ENCODE measurements at regions of chr16 and their contacts with region 1.

Region 1: GRCh38 chr16:87702325-87702811 is 63.4 kb downstream of the KLHDC4 start:
- DNase-seq: peak in 6 of 9 donors; percentile 21 to 41 (median 36)
- ATAC-seq: peak; percentile 60
- H3K4me3 ChIP-seq: no peak overlapping the region
- H3K4me3 Mint-ChIP-seq: peak overlapping the region; percentile 15 to 84 (median 76)
- H3K27ac ChIP-seq: peak overlapping the region; percentile 57
- H3K27ac Mint-ChIP-seq: peak overlapping the region; percentile 66 to 93 (median 91)
- H3K4me1 ChIP-seq: peaks cover 21 to 31% of the 10 kb centered on the region in 2 donors
- H3K4me1 Mint-ChIP-seq: peaks cover 29 to 55% (median 50%) of the 10 kb centered on the region in 7 donors
- H3K27me3 ChIP-seq: no peaks in the 10 kb centered on the region
- H3K27me3 Mint-ChIP-seq: no peaks in the 10 kb centered on the region

Region 2: GRCh38 chr16:87713451-87714229 is 11.3 kb after region 1 on chr16:
- CTCF ChIA-PET with region 1: no interaction called
- POLR2A ChIA-PET with region 1: interaction called, 3 read pairs
- intact Hi-C with region 1: loop called in 1 of 2 experiments (anchors 1 kb)
- DNase-seq: peak in 7 of 9 donors; percentile 54 to 68 (median 57)
- ATAC-seq: peak; percentile 93
- H3K4me3 ChIP-seq: peak overlapping the region; percentile 11
- H3K4me3 Mint-ChIP-seq: peak overlapping the region in 9 of 10 donors; percentile 50 to 79 (median 65)
- H3K27ac ChIP-seq: peak overlapping the region; percentile 61
- H3K27ac Mint-ChIP-seq: peak overlapping the region; percentile 70 to 97 (median 92)
- H3K4me1 ChIP-seq: peaks cover 11 to 26% of the 10 kb centered on the region in 2 donors
- H3K4me1 Mint-ChIP-seq: peaks cover 13 to 45% (median 27%) of the 10 kb centered on the region in 7 donors
- H3K27me3 ChIP-seq: no peaks in the 10 kb centered on the region
- H3K27me3 Mint-ChIP-seq: no peaks in the 10 kb centered on the region

Region 3: DNA sequence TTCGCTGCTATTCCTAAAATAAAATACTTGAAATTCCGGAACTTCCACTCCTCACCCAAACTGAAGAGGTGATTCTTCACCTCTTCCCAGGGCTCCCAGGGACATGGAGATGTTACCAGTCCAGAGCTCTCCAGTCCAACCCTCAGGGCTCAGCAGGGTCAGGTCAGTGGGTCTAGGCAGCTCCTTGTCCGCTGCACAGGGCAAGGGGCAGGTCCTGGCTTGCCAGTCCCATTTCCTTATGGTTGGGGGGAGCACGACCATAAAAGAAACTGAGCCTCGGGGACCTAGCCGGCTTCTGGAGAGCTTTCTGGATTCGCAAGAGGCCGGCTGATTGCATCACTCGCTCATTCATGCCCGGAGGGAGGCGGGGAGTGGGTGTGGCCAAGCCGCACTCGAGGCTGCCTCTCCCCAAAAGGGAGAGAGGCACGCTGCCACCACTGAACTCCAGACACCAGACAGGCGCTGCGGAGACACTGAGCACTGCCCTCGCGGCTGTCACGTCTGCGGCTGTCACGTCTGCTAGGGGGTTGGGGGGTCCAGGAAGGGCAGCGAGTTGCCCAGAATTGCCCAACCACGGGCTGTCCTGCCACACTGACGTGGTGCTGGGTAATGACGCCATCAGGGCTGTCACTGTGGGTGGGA is 151.2 kb after region 1 on chr16:
- CTCF ChIA-PET with region 1: no interaction called
- POLR2A ChIA-PET with region 1: no interaction called
- intact Hi-C with region 1: no loop called
- DNase-seq: peak; percentile 44 to 83 (median 60)
- ATAC-seq: peak; percentile 83
- H3K4me3 ChIP-seq: peak overlapping the region; percentile 18
- H3K4me3 Mint-ChIP-seq: peak overlapping the region in 9 of 10 donors; percentile 41 to 84 (median 65)
- H3K27ac ChIP-seq: peak overlapping the region; percentile 36
- H3K27ac Mint-ChIP-seq: peak overlapping the region in 5 of 9 donors; percentile 31 to 95 (median 74)
- H3K4me1 ChIP-seq: peaks cover 20 to 33% of the 10 kb centered on the region in 2 donors
- H3K4me1 Mint-ChIP-seq: peaks cover 9 to 60% (median 18%) of the 10 kb centered on the region in 7 donors
- H3K27me3 ChIP-seq: no peaks in the 10 kb centered on the region
- H3K27me3 Mint-ChIP-seq: no peaks in the 10 kb centered on the region

Measured in naive thymus-derived CD4-positive, alpha-beta T cell (primary cell).